ENCODE measurements at regions of chr3 and their contacts with region 1.

Region 1: DNA sequence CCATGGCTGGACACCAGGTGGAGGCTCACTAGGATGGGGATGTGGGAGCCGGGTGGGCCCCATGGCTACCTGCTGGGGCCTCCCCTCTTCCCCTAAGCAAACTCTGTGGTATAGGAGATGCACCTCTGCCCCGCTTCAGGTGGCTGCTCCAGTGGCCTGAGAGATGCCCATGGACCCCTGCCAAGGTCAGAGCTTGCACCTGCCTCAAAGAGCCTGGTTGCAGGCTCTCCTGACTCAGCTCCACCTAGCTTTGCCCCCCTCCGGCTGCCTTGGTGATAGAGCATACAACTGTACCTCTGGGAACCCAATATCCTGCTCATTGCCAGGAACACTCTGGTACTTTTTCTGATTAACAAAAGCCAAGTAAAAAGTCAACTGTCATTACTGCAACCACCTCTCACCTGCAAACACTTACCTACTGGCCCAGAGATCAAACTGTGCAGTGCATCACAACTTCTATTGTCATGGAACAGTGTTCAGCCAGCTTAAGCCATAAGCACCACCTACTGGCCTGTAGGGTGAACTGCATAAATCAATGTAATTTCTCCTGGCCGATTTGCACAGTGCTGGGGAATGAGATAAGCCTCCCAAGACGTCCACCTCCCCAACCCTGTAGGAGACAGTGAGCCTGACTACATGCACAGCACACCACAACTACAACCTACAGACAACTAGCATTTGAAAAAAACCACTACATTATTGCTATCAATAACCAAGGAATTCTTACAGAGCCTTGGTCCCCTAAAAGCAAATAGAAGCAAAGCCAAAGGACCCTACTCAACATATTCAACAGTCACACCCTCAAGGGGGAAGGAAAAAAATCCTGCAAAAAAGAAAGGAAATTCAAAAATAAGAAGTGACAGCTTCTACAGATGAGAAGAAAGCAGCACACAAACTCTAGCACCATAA is 352.4 kb upstream of the ARHGEF26 start:
- DNase-seq: peak; percentile 29
- H3K4me3 Mint-ChIP-seq: no peak overlapping the region
- H3K27ac Mint-ChIP-seq: no peak overlapping the region
- H3K4me1 Mint-ChIP-seq: no peaks in the 10 kb centered on the region
- H3K27me3 Mint-ChIP-seq: peaks cover 17% of the 10 kb centered on the region

Region 2: GRCh38 chr3:153026026-153026425 is 742.8 kb before region 1 on chr3:
- intact Hi-C with region 1: loop called (anchors 5 kb)
- DNase-seq: no peak
- H3K4me3 Mint-ChIP-seq: no peak overlapping the region
- H3K27ac Mint-ChIP-seq: no peak overlapping the region
- H3K4me1 Mint-ChIP-seq: no peaks in the 10 kb centered on the region
- H3K27me3 Mint-ChIP-seq: peaks cover 11% of the 10 kb centered on the region

Region 3: GRCh38 chr3:153043729-153044328 is 725.0 kb before region 1 on chr3:
- intact Hi-C with region 1: loop called (anchors 1 kb)
- DNase-seq: no peak
- H3K4me3 Mint-ChIP-seq: no peak overlapping the region
- H3K27ac Mint-ChIP-seq: no peak overlapping the region
- H3K4me1 Mint-ChIP-seq: peaks cover 5% of the 10 kb centered on the region
- H3K27me3 Mint-ChIP-seq: peaks cover 4% of the 10 kb centered on the region

Region 4: DNA sequence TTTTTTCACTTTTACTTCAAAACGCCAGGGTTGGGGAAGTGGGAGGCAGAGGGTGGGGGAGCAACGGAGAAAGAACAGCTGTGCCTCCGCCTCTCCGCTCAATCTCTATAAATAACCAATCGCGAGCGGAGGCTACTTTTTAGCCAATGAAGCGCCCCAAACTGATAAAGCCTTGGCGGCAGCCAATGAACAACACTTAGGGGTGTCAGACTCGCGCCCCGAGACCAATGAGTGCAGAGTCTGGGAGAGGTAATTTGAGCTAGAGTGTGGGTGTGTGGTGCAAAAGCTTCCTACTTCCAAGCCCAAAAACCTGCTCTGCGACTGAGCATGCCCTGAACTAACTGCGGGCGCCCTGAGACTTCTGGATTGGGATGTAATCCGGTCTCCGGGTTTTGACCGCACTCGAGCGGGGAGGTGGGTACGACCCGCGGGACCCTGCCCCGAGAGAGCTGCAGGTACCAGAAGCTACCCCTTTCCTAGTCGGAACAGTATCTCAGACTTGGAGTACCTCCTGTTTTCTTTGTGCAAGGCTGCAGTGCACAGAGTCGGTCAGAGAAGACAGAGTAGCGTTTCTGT is 607.6 kb before region 1 on chr3:
- intact Hi-C with region 1: loop called (anchors 1 kb)
- DNase-seq: peak; percentile 93
- H3K4me3 Mint-ChIP-seq: peak overlapping the region; percentile 94
- H3K27ac Mint-ChIP-seq: peak overlapping the region; percentile 97
- H3K4me1 Mint-ChIP-seq: peaks cover 31% of the 10 kb centered on the region
- H3K27me3 Mint-ChIP-seq: no peaks in the 10 kb centered on the region

Region 5: DNA sequence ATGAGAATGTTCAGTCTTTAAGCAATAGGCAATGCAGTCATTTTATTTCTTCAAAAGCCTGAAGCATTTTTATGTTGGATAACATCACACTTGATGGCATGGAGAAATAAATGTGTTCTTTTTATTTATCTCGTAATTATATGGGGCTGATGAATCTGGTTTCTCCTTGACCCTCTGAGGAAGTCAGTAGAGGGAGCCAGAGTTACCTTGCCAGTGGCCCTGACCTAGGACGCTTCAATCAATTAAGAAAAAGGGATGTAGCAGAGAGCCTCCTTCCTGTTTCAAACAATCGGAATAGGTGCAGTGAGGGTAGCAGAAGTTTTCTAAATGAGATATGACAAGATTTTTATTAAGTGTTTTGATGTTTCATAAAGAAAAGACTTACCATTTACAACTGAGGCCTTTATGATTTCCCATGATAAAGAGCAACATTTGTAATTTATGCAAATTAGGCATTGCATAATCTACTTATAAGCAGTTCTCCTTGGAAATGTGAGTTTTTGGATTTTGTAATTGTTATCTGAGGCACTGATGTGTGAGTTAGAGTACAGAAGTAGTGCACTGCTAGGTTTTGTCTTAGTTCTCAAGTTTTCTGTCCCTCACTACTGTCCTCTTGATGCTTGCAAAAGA is 477.6 kb before region 1 on chr3:
- intact Hi-C with region 1: loop called (anchors 5 kb)
- DNase-seq: no peak
- H3K4me3 Mint-ChIP-seq: no peak overlapping the region
- H3K27ac Mint-ChIP-seq: no peak overlapping the region
- H3K4me1 Mint-ChIP-seq: peaks cover 21% of the 10 kb centered on the region
- H3K27me3 Mint-ChIP-seq: no peaks in the 10 kb centered on the region

Region 6: DNA sequence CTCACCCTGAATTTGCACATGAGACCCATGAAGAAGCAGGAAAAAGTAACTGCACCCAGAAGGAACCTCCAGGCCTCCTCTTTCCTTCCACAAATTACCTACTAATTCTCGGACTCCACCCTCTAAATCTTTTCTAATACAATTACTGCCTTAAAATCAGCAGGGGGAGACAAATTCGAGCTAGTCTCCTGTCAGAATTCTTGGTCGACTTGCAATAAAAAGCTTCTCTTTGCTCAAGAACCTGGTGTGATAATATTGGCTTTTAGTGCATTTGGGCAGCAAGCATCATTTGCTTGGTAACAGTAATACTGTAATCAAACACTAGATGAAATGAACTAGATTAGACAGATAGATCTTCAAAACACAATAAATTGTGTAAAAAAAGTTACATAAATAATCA is 324.9 kb before region 1 on chr3:
- intact Hi-C with region 1: loop called (anchors 1 kb)
- DNase-seq: no peak
- H3K4me3 Mint-ChIP-seq: no peak overlapping the region
- H3K27ac Mint-ChIP-seq: no peak overlapping the region
- H3K4me1 Mint-ChIP-seq: peaks cover 13% of the 10 kb centered on the region
- H3K27me3 Mint-ChIP-seq: peaks cover 1% of the 10 kb centered on the region

Region 7: GRCh38 chr3:153595186-153595815 is 173.5 kb before region 1 on chr3:
- intact Hi-C with region 1: loop called (anchors 5 kb)
- DNase-seq: no peak
- H3K4me3 Mint-ChIP-seq: no peak overlapping the region
- H3K27ac Mint-ChIP-seq: no peak overlapping the region
- H3K4me1 Mint-ChIP-seq: peaks cover 4% of the 10 kb centered on the region
- H3K27me3 Mint-ChIP-seq: no peaks in the 10 kb centered on the region

Measured in activated T-helper 2 cell treated with anti-CD3 and anti-CD28 coated beads, Interferon-gamma antibody, Interleukin-2, Interleukin-4, amounts not matched to agents 10 μg/mL and 5 μg/mL and 100 μg/mL, durations not matched to agents 14 hours and 24 hours and 36 hours (primary cell).